CD14-positive monocyte (primary cell): ENCODE measurements at regions of chr19 and their contacts with region 1.

Region 1: GRCh38 chr19:21020298-21021227 is at the start of gene ZNF430:
- DNase-seq: peak; percentile 92 to 94 (median 93)
- H3K4me3 ChIP-seq: peak within 1 kb of the TSS; percentile 70 to 89 (median 74)
- H3K4me3 Mint-ChIP-seq: peak within 1 kb of the TSS; percentile 100
- H3K27ac ChIP-seq: peak within 1 kb of the TSS; percentile 96 to 98
- H3K27ac Mint-ChIP-seq: peak within 1 kb of the TSS; percentile 99 to 100 (median 100)
- H3K4me1 ChIP-seq: peaks cover 9 to 19% of the 10 kb centered on the region in 2 donors
- H3K4me1 Mint-ChIP-seq: peaks cover 22% of the 10 kb centered on the region
- H3K27me3 ChIP-seq: no peaks in the 10 kb centered on the region
- H3K27me3 Mint-ChIP-seq: peaks cover 0 to 3% (median 0%) of the 10 kb centered on the region in 3 donors
- CTCF ChIP-seq: no peak
- polyA plus RNA-seq, gene ZNF430: 5.7 to 11.6 (median 8.8) TPM

Region 2: GRCh38 chr19:20912973-20913372 is 107.6 kb before region 1 on chr19:
- intact Hi-C with region 1: no loop called
- DNase-seq: no peak
- H3K4me3 ChIP-seq: no peak overlapping the region
- H3K4me3 Mint-ChIP-seq: no peak overlapping the region
- H3K27ac ChIP-seq: no peak overlapping the region
- H3K27ac Mint-ChIP-seq: no peak overlapping the region
- H3K4me1 ChIP-seq: no peaks in the 10 kb centered on the region
- H3K4me1 Mint-ChIP-seq: no peaks in the 10 kb centered on the region
- H3K27me3 ChIP-seq: no peaks in the 10 kb centered on the region
- H3K27me3 Mint-ChIP-seq: no peaks in the 10 kb centered on the region
- CTCF ChIP-seq: no peak

Region 3: DNA sequence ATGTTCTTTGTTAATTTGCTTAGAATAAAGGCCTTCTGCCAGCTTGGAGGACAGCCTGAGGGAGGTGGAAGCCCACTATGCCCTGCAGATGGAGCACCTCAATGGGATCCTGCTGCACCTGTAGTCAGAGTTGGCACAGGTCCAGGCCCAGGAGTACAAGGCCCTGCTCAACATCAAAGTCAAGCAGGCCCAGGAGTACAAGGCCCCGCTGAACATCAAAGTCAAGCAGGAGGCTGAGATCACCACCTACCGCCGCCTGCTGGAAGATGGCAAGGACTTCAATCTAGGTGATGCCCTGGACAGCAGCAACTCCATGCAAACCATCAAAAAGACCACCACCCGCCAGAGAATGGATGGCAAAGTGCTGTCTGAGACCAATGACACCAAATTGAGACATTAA is 55.8 kb before region 1 on chr19:
- intact Hi-C with region 1: no loop called
- DNase-seq: no peak
- H3K4me3 ChIP-seq: no peak overlapping the region
- H3K4me3 Mint-ChIP-seq: no peak overlapping the region
- H3K27ac ChIP-seq: no peak overlapping the region
- H3K27ac Mint-ChIP-seq: no peak overlapping the region
- H3K4me1 ChIP-seq: no peaks in the 10 kb centered on the region
- H3K4me1 Mint-ChIP-seq: no peaks in the 10 kb centered on the region
- H3K27me3 ChIP-seq: no peaks in the 10 kb centered on the region
- H3K27me3 Mint-ChIP-seq: peaks cover 0 to 2% (median 0%) of the 10 kb centered on the region in 3 donors
- CTCF ChIP-seq: no peak

Region 4: GRCh38 chr19:21082011-21082975 is 61.7 kb after region 1 on chr19 and contains the start of gene ZNF714:
- intact Hi-C with region 1: loop called in 1 of 2 experiments (anchors 5 kb)
- DNase-seq: peak; percentile 71 to 80 (median 78)
- H3K4me3 ChIP-seq: peak within 1 kb of the TSS; percentile 57 to 90 (median 86)
- H3K4me3 Mint-ChIP-seq: peak within 1 kb of the TSS; percentile 97
- H3K27ac ChIP-seq: peak within 1 kb of the TSS; percentile 80 to 91
- H3K27ac Mint-ChIP-seq: peak within 1 kb of the TSS; percentile 88 to 99 (median 98)
- H3K4me1 ChIP-seq: peaks cover 0 to 7% of the 10 kb centered on the region in 2 donors
- H3K4me1 Mint-ChIP-seq: peaks cover 6% of the 10 kb centered on the region
- H3K27me3 ChIP-seq: no peaks in the 10 kb centered on the region
- H3K27me3 Mint-ChIP-seq: no peaks in the 10 kb centered on the region
- CTCF ChIP-seq: no peak
- polyA plus RNA-seq, gene ZNF714: 1.7 to 5.8 (median 2.4) TPM

Region 5: GRCh38 chr19:21141787-21142464 is 121.4 kb after region 1 on chr19 and contains the start of gene ZNF431:
- intact Hi-C with region 1: loop called in 1 of 2 experiments (anchors 2 kb)
- DNase-seq: peak; percentile 83 to 87 (median 84)
- H3K4me3 ChIP-seq: peak within 1 kb of the TSS; percentile 56 to 92 (median 69)
- H3K4me3 Mint-ChIP-seq: peak within 1 kb of the TSS; percentile 97 to 98
- H3K27ac ChIP-seq: peak within 1 kb of the TSS; percentile 84 to 94
- H3K27ac Mint-ChIP-seq: peak within 1 kb of the TSS; percentile 96 to 99 (median 98)
- H3K4me1 ChIP-seq: peaks cover 7 to 9% of the 10 kb centered on the region in 2 donors
- H3K4me1 Mint-ChIP-seq: peaks cover 13% of the 10 kb centered on the region
- H3K27me3 ChIP-seq: no peaks in the 10 kb centered on the region
- H3K27me3 Mint-ChIP-seq: peaks cover 0 to 2% (median 0%) of the 10 kb centered on the region in 3 donors
- CTCF ChIP-seq: no peak
- polyA plus RNA-seq, gene ZNF431: 1.8 to 9.8 (median 4.6) TPM

Region 6: GRCh38 chr19:21260164-21260847 is 239.7 kb after region 1 on chr19:
- intact Hi-C with region 1: no loop called
- DNase-seq: no peak
- H3K4me3 ChIP-seq: no peak overlapping the region
- H3K4me3 Mint-ChIP-seq: no peak overlapping the region
- H3K27ac ChIP-seq: no peak overlapping the region
- H3K27ac Mint-ChIP-seq: no peak overlapping the region
- H3K4me1 ChIP-seq: no peaks in the 10 kb centered on the region
- H3K4me1 Mint-ChIP-seq: no peaks in the 10 kb centered on the region
- H3K27me3 ChIP-seq: no peaks in the 10 kb centered on the region
- H3K27me3 Mint-ChIP-seq: peaks cover 0 to 1% (median 0%) of the 10 kb centered on the region in 3 donors
- CTCF ChIP-seq: no peak

Region 7: DNA sequence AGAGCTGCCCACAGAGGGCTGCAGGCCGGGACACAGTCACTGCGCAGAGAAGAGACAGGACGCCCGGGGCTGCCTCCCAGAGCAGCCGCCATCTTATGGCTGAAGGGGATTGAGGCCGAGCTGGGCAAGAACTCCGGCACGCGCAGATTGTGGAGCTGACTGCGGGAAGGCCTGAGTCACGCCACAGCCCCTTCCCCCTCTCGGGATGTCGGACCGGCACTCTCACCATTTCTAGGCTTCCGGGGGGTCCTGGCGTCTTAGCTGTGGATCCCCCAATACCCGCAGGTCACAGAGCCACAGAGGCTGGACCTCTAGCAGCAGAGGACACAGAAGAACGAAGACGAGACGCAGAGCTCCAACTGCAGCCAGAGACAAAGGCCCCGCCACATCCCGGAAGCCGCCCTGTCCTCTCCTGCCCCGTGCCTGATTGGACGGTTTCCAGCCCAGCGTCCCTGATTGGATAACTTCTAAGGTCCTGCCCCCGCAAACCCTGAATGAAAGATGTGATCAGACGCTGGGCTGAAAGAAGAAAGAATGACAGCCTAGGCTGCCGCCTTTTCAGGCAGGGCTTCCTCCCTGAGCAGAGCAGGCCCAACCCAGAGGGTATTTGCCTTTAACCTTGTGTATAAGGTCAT is 815.4 kb after region 1 on chr19 and contains the start of gene ZNF43:
- intact Hi-C with region 1: loop called in 1 of 2 experiments (anchors 10 kb)
- DNase-seq: peak; percentile 81 to 86 (median 84)
- H3K4me3 ChIP-seq: peak within 1 kb of the TSS; percentile 59 to 92 (median 63)
- H3K4me3 Mint-ChIP-seq: peak within 1 kb of the TSS; percentile 98 to 99
- H3K27ac ChIP-seq: peak within 1 kb of the TSS; percentile 92 to 95
- H3K27ac Mint-ChIP-seq: peak within 1 kb of the TSS; percentile 98 to 100 (median 99)
- H3K4me1 ChIP-seq: peaks cover 13 to 18% of the 10 kb centered on the region in 2 donors
- H3K4me1 Mint-ChIP-seq: peaks cover 4% of the 10 kb centered on the region
- H3K27me3 ChIP-seq: no peaks in the 10 kb centered on the region
- H3K27me3 Mint-ChIP-seq: peaks cover 0 to 3% (median 0%) of the 10 kb centered on the region in 3 donors
- CTCF ChIP-seq: no peak
- polyA plus RNA-seq, gene ZNF43: 1.1 to 3.0 (median 3.0) TPM

Region 8: DNA sequence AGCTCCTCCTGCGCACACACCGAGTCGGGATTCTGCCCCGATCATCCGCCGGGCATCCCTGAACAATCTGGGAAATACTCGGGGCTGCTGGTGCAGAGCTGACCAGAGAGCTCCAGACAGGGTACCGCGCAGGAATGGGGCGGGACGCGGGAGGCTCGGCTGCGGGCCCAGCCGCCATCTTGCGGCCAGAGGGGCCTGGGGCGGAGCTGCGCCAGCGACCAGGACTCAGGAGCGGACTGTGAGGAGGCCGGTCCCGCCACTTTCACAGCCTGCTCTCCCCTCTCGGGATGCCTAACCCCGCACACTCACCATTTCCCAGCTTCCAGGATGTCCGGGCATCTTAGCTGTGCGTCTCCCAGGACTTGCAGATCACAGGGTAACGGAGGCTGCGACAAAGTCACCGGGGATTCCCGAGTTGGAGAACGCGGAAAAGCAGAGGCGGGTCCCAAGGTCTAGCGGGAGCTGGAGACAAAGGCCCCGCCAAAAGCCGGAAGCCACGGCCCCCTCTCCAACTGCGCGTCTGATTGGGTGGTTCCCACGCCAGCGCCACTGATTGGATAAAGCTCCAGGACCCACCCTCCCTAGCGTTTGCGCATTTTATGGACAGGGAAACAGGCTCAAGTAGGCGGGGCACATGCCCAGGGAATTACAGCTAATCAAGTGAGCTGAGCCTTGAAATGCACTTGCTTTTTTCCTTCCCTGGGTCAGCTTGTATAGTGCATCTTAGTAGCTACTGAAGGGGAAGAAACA is 831.2 kb after region 1 on chr19:
- intact Hi-C with region 1: loop called in 1 of 2 experiments (anchors 10 kb)
- DNase-seq: peak; percentile 81 to 88 (median 82)
- H3K4me3 ChIP-seq: peak overlapping the region; percentile 80 to 99 (median 88)
- H3K4me3 Mint-ChIP-seq: peak overlapping the region; percentile 96 to 98
- H3K27ac ChIP-seq: peak overlapping the region; percentile 73 to 89
- H3K27ac Mint-ChIP-seq: peak overlapping the region; percentile 80 to 91 (median 85)
- H3K4me1 ChIP-seq: peaks cover 5 to 15% of the 10 kb centered on the region in 2 donors
- H3K4me1 Mint-ChIP-seq: peaks cover 11% of the 10 kb centered on the region
- H3K27me3 ChIP-seq: no peaks in the 10 kb centered on the region
- H3K27me3 Mint-ChIP-seq: peaks cover 0 to 2% (median 0%) of the 10 kb centered on the region in 3 donors
- CTCF ChIP-seq: no peak